Psoas muscle (tissue), 8 donors: ENCODE measurements at regions of chr6 and their contacts with region 1.

Region 1: DNA sequence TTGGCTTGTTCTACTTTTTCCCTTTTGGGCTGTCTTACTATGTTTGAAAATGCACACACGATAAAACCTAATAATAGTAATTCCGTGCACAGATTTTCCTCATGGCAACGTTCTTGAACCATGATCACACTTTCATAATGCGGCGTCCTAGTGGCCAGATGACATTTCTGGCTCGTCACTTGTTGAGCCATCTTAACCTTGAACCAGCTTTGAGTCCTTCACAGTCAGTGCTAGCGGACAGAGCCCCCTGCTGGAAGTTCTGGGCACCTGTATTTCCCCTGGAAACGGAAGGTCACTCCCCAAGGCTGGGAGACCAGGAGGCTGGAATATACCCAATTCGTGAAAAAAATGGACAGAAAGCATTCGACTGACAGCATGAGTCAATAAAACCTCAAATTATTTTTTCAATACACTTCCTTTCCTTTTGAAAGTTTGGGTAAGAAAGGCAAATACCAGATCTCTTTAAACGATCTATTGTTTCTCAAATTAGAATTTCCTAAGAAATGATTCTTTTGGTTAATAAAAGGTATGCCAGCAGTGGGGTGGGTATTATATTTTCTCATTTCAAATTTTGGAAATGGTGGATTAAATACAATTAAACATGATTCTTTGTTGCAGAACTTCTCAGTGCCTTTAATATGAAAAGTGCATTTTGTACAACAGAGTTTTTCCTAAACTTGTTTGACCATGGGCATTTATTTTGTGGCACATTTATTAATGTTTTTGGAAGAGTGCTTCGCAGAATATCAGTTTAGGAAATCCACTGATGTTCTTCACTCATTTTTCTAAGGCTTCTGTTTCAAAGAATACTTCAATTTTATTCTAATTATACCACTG is 542.3 kb downstream of the QKI start:
- DNase-seq: peak; percentile 80 to 91
- ATAC-seq: peak; percentile 85 to 90 (median 88)
- H3K4me3 ChIP-seq: peak overlapping the region; percentile 23
- H3K27ac ChIP-seq: peak overlapping the region; percentile 95
- H3K4me1 ChIP-seq: peaks cover 44% of the 10 kb centered on the region
- H3K27me3 ChIP-seq: no peaks in the 10 kb centered on the region
- CTCF ChIP-seq: peak; percentile 95

Region 2: GRCh38 chr6:163338671-163339405 is 618.0 kb before region 1 on chr6:
- intact Hi-C with region 1: loop called (anchors 10 kb)
- DNase-seq: peak; percentile 56 to 78
- ATAC-seq: peak; percentile 79 to 83 (median 80)
- H3K4me3 ChIP-seq: peak overlapping the region; percentile 50
- H3K27ac ChIP-seq: peak overlapping the region; percentile 94
- H3K4me1 ChIP-seq: peaks cover 72% of the 10 kb centered on the region
- H3K27me3 ChIP-seq: no peaks in the 10 kb centered on the region
- CTCF ChIP-seq: no peak

Region 3: GRCh38 chr6:163419413-163420288 is 537.1 kb before region 1 on chr6:
- intact Hi-C with region 1: loop called (anchors 1 to 5 kb)
- DNase-seq: no peak
- ATAC-seq: peak; percentile 16 to 41 (median 28)
- H3K4me3 ChIP-seq: peak overlapping the region; percentile 93
- H3K27ac ChIP-seq: peak overlapping the region; percentile 99
- H3K4me1 ChIP-seq: peaks cover 57% of the 10 kb centered on the region
- H3K27me3 ChIP-seq: no peaks in the 10 kb centered on the region
- CTCF ChIP-seq: no peak

Region 4: GRCh38 chr6:163585932-163586437 is 370.8 kb before region 1 on chr6:
- intact Hi-C with region 1: loop called (anchors 5 kb)
- DNase-seq: peak; percentile 65 to 86
- ATAC-seq: peak; percentile 81 to 85 (median 84)
- H3K4me3 ChIP-seq: peak overlapping the region; percentile 17
- H3K27ac ChIP-seq: peak overlapping the region; percentile 83
- H3K4me1 ChIP-seq: peaks cover 39% of the 10 kb centered on the region
- H3K27me3 ChIP-seq: no peaks in the 10 kb centered on the region
- CTCF ChIP-seq: no peak

Region 5: GRCh38 chr6:163814494-163815364 is 142.1 kb before region 1 on chr6:
- intact Hi-C with region 1: loop called in 1 of 2 experiments (anchors 2 kb)
- DNase-seq: peak; percentile 71 to 83
- ATAC-seq: peak; percentile 93 to 97 (median 96)
- H3K4me3 ChIP-seq: peak overlapping the region; percentile 5
- H3K27ac ChIP-seq: peak overlapping the region; percentile 92
- H3K4me1 ChIP-seq: peaks cover 28% of the 10 kb centered on the region
- H3K27me3 ChIP-seq: no peaks in the 10 kb centered on the region
- CTCF ChIP-seq: peak; percentile 34

Region 6: GRCh38 chr6:163828038-163828795 is 128.6 kb before region 1 on chr6:
- intact Hi-C with region 1: no loop called
- DNase-seq: peak; percentile 61 to 72
- ATAC-seq: peak; percentile 73 to 92 (median 81)
- H3K4me3 ChIP-seq: no peak overlapping the region
- H3K27ac ChIP-seq: peak overlapping the region; percentile 25
- H3K4me1 ChIP-seq: peaks cover 23% of the 10 kb centered on the region
- H3K27me3 ChIP-seq: no peaks in the 10 kb centered on the region
- CTCF ChIP-seq: no peak

Region 7: GRCh38 chr6:163923658-163924411 is 33.0 kb before region 1 on chr6:
- intact Hi-C with region 1: no loop called
- DNase-seq: peak; percentile 22 to 89
- ATAC-seq: peak; percentile 76 to 98 (median 96)
- H3K4me3 ChIP-seq: peak overlapping the region; percentile 48
- H3K27ac ChIP-seq: peak overlapping the region; percentile 77
- H3K4me1 ChIP-seq: peaks cover 6% of the 10 kb centered on the region
- H3K27me3 ChIP-seq: no peaks in the 10 kb centered on the region
- CTCF ChIP-seq: no peak